ENCODE measurements at regions of chr2 and their contacts with region 1.

Region 1: GRCh38 chr2:74052732-74053597 is 68.3 kb downstream of the TET3 start:
- DNase-seq: peak in 6 of 9 experiments; percentile 19 to 70 (median 48)
- ATAC-seq: peak; percentile 96
- H3K4me3 ChIP-seq: no peak overlapping the region
- H3K4me3 Mint-ChIP-seq: peak overlapping the region; percentile 59
- H3K27ac ChIP-seq: peak overlapping the region in 1 of 2 experiments; percentile 17
- H3K27ac Mint-ChIP-seq: peak overlapping the region; percentile 87
- H3K4me1 ChIP-seq: peaks cover 23% of the 10 kb centered on the region
- H3K4me1 Mint-ChIP-seq: peaks cover 47% of the 10 kb centered on the region
- H3K27me3 ChIP-seq: no peaks in the 10 kb centered on the region
- H3K27me3 Mint-ChIP-seq: no peaks in the 10 kb centered on the region
- CTCF ChIP-seq: no peak

Region 2: GRCh38 chr2:73404409-73404808 is 648.6 kb before region 1 on chr2:
- CTCF ChIA-PET with region 1: no interaction called
- POLR2A ChIA-PET with region 1: no interaction called
- intact Hi-C with region 1: no loop called
- DNase-seq: no peak
- ATAC-seq: no peak
- H3K4me3 ChIP-seq: no peak overlapping the region
- H3K4me3 Mint-ChIP-seq: no peak overlapping the region
- H3K27ac ChIP-seq: no peak overlapping the region
- H3K27ac Mint-ChIP-seq: no peak overlapping the region
- H3K4me1 ChIP-seq: no peaks in the 10 kb centered on the region
- H3K4me1 Mint-ChIP-seq: peaks cover 12% of the 10 kb centered on the region
- H3K27me3 ChIP-seq: no peaks in the 10 kb centered on the region
- H3K27me3 Mint-ChIP-seq: no peaks in the 10 kb centered on the region
- CTCF ChIP-seq: no peak

Region 3: GRCh38 chr2:73451263-73451972 is 601.5 kb before region 1 on chr2:
- CTCF ChIA-PET with region 1: no interaction called
- POLR2A ChIA-PET with region 1: no interaction called
- intact Hi-C with region 1: no loop called
- DNase-seq: no peak
- ATAC-seq: no peak
- H3K4me3 ChIP-seq: no peak overlapping the region
- H3K4me3 Mint-ChIP-seq: no peak overlapping the region
- H3K27ac ChIP-seq: no peak overlapping the region
- H3K27ac Mint-ChIP-seq: no peak overlapping the region
- H3K4me1 ChIP-seq: no peaks in the 10 kb centered on the region
- H3K4me1 Mint-ChIP-seq: no peaks in the 10 kb centered on the region
- H3K27me3 ChIP-seq: no peaks in the 10 kb centered on the region
- H3K27me3 Mint-ChIP-seq: no peaks in the 10 kb centered on the region
- CTCF ChIP-seq: no peak

Region 4: DNA sequence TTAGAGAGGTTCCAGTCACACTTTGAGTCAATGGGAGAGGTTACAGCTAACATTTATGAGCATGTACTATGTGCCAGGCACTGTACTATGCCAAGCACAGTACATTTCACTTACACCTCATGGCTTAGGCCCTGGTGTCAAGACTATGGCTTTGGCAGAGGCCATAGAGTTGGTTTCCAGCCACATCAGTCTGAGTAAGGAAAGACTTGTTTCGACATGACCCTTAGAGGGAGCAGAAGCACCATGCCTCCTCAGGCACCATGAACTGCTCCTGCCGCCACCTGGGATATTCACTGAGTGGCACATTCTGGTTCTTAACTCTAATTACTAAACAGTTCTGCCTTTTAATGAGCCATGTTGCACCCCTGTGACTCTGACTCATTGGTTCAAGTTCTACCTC is 113.5 kb before region 1 on chr2:
- CTCF ChIA-PET with region 1: no interaction called
- POLR2A ChIA-PET with region 1: no interaction called
- intact Hi-C with region 1: loop called in 1 of 2 experiments (anchors 5 kb)
- DNase-seq: peak in 4 of 9 experiments; percentile 34 to 64 (median 44)
- ATAC-seq: peak; percentile 80
- H3K4me3 ChIP-seq: no peak overlapping the region
- H3K4me3 Mint-ChIP-seq: no peak overlapping the region
- H3K27ac ChIP-seq: no peak overlapping the region
- H3K27ac Mint-ChIP-seq: peak overlapping the region; percentile 56
- H3K4me1 ChIP-seq: peaks cover 33% of the 10 kb centered on the region
- H3K4me1 Mint-ChIP-seq: peaks cover 73% of the 10 kb centered on the region
- H3K27me3 ChIP-seq: no peaks in the 10 kb centered on the region
- H3K27me3 Mint-ChIP-seq: no peaks in the 10 kb centered on the region
- CTCF ChIP-seq: peak; percentile 20

Region 5: DNA sequence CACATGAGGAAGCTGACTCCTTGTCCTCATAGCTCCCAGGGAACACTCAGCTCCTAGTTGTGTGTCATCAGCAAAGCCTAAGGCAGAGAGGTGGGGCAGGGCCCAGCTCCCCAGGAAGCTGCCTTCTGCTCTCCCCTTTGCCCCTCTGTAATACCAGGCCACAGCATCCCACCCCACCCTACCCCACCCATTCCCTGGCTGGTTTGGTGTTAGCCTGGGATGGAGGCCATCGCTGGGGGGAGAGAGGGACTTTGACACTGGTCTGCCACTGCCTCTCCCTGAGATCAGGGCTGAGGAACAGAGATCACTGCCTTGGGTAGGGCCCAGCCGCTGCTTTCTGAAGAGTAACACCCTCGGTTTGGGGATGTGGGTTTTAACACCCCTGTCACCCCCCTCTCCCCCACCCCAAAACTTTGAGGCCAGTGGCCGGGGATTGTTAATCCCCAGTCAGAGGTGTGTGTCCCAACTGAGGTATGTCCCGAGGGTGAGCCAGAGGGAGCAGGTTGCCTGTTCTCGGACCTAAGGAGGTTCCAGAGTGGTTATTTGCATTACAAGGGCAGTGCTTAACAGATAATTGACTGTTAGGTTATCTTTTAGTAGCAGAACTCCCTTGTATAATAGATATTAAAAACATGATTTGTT is 26.9 kb before region 1 on chr2:
- CTCF ChIA-PET with region 1: no interaction called
- POLR2A ChIA-PET with region 1: no interaction called
- intact Hi-C with region 1: loop called in 1 of 2 experiments (anchors 2 kb)
- DNase-seq: peak in 4 of 9 experiments; percentile 20 to 55 (median 48)
- ATAC-seq: peak; percentile 57
- H3K4me3 ChIP-seq: no peak overlapping the region
- H3K4me3 Mint-ChIP-seq: peak overlapping the region; percentile 29
- H3K27ac ChIP-seq: peak overlapping the region in 1 of 2 experiments; percentile 58
- H3K27ac Mint-ChIP-seq: peak overlapping the region; percentile 77
- H3K4me1 ChIP-seq: peaks cover 51% of the 10 kb centered on the region
- H3K4me1 Mint-ChIP-seq: peaks cover 69% of the 10 kb centered on the region
- H3K27me3 ChIP-seq: no peaks in the 10 kb centered on the region
- H3K27me3 Mint-ChIP-seq: no peaks in the 10 kb centered on the region
- CTCF ChIP-seq: no peak

Region 6: DNA sequence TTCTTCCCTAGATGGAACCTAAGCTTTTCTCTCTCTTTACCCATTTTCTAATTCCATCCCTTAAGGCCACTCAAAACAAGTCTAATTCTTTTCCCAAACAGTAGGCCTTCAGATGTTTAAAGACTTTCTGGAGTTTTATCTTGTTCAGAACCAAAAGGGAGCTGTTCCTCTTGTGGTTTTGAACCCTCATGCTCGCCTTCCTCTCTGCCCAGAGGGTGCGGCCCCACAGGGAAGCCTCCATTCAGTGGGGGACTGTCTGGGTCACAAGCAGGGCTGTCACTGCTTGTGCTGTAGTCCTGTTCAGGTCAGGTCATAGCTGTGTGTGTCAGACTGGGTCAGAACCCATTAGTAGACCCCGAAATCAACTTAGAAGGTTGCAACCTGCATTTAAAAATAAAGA is 11.8 kb before region 1 on chr2:
- CTCF ChIA-PET with region 1: interaction called, 6 read pairs
- POLR2A ChIA-PET with region 1: interaction called, 10 read pairs
- intact Hi-C with region 1: no loop called
- DNase-seq: no peak
- ATAC-seq: no peak
- H3K4me3 ChIP-seq: no peak overlapping the region
- H3K4me3 Mint-ChIP-seq: no peak overlapping the region
- H3K27ac ChIP-seq: no peak overlapping the region
- H3K27ac Mint-ChIP-seq: peak overlapping the region; percentile 45
- H3K4me1 ChIP-seq: peaks cover 49% of the 10 kb centered on the region
- H3K4me1 Mint-ChIP-seq: peaks cover 81% of the 10 kb centered on the region
- H3K27me3 ChIP-seq: no peaks in the 10 kb centered on the region
- H3K27me3 Mint-ChIP-seq: no peaks in the 10 kb centered on the region
- CTCF ChIP-seq: no peak

Region 7: GRCh38 chr2:74104839-74105238 is 51.9 kb after region 1 on chr2:
- CTCF ChIA-PET with region 1: no interaction called
- POLR2A ChIA-PET with region 1: no interaction called
- intact Hi-C with region 1: no loop called
- DNase-seq: peak in 1 of 9 experiments; percentile 30
- ATAC-seq: peak; percentile 40
- H3K4me3 ChIP-seq: no peak overlapping the region
- H3K4me3 Mint-ChIP-seq: no peak overlapping the region
- H3K27ac ChIP-seq: no peak overlapping the region
- H3K27ac Mint-ChIP-seq: no peak overlapping the region
- H3K4me1 ChIP-seq: no peaks in the 10 kb centered on the region
- H3K4me1 Mint-ChIP-seq: no peaks in the 10 kb centered on the region
- H3K27me3 ChIP-seq: no peaks in the 10 kb centered on the region
- H3K27me3 Mint-ChIP-seq: no peaks in the 10 kb centered on the region
- CTCF ChIP-seq: peak; percentile 26